ENCODE measurements at regions of chrX and their contacts with region 1.

Region 1: GRCh38 chrX:51420610-51421009 is 75.8 kb downstream of the NUDT11 start:
- DNase-seq: no peak
- H3K4me3 ChIP-seq: no peak overlapping the region
- H3K27ac ChIP-seq: no peak overlapping the region
- H3K4me1 ChIP-seq: no peaks in the 10 kb centered on the region
- H3K27me3 ChIP-seq: peaks cover 0 to 32% of the 10 kb centered on the region in 2 donors
- CTCF ChIP-seq: peak; percentile 43 to 47 (median 44)
- POLR2A ChIP-seq: no peak

Region 2: GRCh38 chrX:50853399-50853798 is 567.2 kb before region 1 on chrX:
- intact Hi-C with region 1: loop called (anchors 5 kb)
- DNase-seq: no peak
- H3K4me3 ChIP-seq: no peak overlapping the region
- H3K27ac ChIP-seq: no peak overlapping the region
- H3K4me1 ChIP-seq: no peaks in the 10 kb centered on the region
- H3K27me3 ChIP-seq: peaks cover 0 to 18% of the 10 kb centered on the region in 2 donors
- CTCF ChIP-seq: no peak
- POLR2A ChIP-seq: no peak

Region 3: GRCh38 chrX:51332188-51332942 is 88.2 kb before region 1 on chrX and contains the start of gene NUDT10:
- intact Hi-C with region 1: no loop called
- DNase-seq: no peak
- H3K4me3 ChIP-seq: peak within 1 kb of the TSS; percentile 35 to 70 (median 51)
- H3K27ac ChIP-seq: no peak within 1 kb of the TSS
- H3K4me1 ChIP-seq: no peaks in the 10 kb centered on the region
- H3K27me3 ChIP-seq: peaks cover 0 to 63% of the 10 kb centered on the region in 2 donors
- CTCF ChIP-seq: no peak
- POLR2A ChIP-seq: no peak
- total RNA-seq, gene NUDT10: 0.64 to 1.6 (median 1.3) TPM

Region 4: DNA sequence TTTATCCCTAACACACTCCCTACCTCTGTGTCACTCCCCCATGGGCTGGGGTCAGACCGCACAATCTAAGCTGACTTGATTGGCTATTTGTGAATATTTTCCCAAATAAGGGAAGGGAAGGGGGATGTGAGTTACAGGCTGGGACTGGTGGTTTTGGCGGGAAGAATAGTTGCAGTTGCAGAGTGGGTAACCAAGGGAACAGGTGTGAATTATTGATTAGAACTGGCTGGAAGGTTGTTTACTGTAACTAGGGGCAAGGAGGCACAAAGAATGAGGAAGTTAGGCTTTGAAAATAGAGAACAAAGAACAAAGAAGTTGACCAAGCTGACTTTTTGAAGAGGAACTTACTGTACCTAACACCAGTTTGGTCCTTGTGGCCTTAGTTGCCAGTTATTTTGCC is 860.2 kb after region 1 on chrX:
- intact Hi-C with region 1: no loop called
- DNase-seq: no peak
- H3K4me3 ChIP-seq: no peak overlapping the region
- H3K27ac ChIP-seq: no peak overlapping the region
- H3K4me1 ChIP-seq: no peaks in the 10 kb centered on the region
- H3K27me3 ChIP-seq: peaks cover 0 to 69% of the 10 kb centered on the region in 2 donors
- CTCF ChIP-seq: no peak
- POLR2A ChIP-seq: no peak

Region 5: DNA sequence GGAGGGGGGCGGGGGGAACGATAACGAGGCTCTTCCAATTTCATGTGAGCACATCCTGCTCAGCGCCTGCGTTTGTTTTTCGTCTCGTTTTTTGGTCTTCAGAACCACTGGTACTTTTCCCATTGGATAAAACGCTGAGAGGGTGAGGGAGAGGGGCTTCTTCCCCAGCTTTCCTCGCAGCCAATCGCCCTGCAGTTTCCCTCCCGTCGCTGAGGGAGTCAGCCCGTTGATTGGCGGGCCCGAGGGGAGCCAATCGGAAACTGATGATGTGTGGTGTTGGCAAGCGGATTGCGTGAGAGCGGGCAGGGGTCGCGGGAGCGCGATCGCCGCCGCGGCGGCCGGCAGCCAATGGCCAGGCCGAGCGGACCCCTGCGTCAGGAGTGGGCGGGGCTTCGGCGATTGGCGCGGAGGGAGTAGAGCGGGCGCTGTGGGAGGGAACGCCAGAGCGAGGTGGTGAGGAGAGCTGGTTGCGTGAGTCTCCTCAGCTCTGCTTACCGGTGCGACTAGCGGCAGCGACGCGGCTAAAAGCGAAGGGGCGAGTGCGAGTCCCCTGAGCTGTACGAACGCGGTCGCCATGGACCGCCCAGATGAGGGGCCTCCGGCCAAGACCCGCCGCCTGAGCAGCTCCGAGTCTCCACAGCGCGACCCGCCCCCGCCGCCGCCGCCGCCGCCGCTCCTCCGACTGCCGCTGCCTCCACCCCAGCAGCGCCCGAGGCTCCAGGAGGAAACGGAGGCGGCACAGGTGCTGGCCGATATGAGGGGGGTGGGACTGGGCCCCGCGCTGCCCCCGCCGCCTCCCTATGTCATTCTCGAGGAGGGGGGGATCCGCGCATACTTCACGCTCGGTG is 1661.5 kb after region 1 on chrX and contains the start of gene TSPYL2:
- intact Hi-C with region 1: no loop called
- DNase-seq: peak; percentile 93 to 96
- H3K4me3 ChIP-seq: peak within 1 kb of the TSS; percentile 73 to 85 (median 77)
- H3K27ac ChIP-seq: peak within 1 kb of the TSS; percentile 91 to 93
- H3K4me1 ChIP-seq: no peaks in the 10 kb centered on the region
- H3K27me3 ChIP-seq: peaks cover 0 to 48% of the 10 kb centered on the region in 2 donors
- CTCF ChIP-seq: no peak
- POLR2A ChIP-seq: peak; percentile 89
- total RNA-seq, gene TSPYL2: 63.4 to 82.7 (median 76.4) TPM

Measured in breast epithelium (tissue), 4 donors.